PC-3 (cell line): ENCODE measurements at regions of chr3 and their contacts with region 1.

Region 1: GRCh38 chr3:190629088-190629487 is 115.2 kb downstream of the IL1RAP start:
- DNase-seq: no peak
- ATAC-seq: no peak
- H3K4me3 ChIP-seq: no peak overlapping the region
- H3K27ac ChIP-seq: no peak overlapping the region
- H3K4me1 ChIP-seq: no peaks in the 10 kb centered on the region
- H3K27me3 ChIP-seq: no peaks in the 10 kb centered on the region
- CTCF ChIP-seq: no peak

Region 2: DNA sequence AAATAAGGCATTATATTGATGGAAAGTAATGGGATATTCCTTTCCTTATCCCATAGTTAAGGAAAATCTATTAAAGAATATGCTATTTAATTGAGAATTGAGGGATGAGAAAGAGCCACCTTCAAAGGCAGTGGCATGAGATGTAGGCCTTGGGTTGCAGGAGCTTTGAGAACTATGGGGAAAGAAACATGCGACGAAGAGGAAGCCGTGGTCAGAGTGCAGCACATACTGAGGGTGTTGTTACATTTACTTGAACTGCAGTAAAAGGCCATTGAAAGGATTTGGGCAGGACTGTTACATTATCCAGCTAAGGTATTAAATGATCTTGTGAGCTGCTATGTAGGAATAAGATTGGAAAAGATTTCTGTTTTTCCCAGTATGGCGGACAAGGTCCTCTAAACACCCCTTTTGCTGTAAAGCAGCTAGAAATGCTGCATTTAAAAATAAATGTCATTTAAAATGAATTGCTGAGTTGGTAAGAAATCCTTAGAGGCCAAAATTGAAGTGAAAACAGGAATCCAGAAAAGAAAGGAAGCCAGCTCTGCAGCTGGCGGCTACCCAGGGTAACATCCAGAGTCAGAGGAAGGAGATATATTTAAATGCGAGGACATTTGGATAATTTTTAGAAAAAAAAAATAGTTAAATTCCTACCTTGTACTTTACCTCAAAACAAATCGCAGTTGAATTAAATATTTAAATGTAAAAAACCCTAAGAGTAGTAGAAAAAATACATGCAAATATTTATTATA is 53.5 kb before region 1 on chr3:
- CTCF ChIA-PET with region 1: no interaction called
- POLR2A ChIA-PET with region 1: interaction called, 10 read pairs
- intact Hi-C with region 1: no loop called
- DNase-seq: no peak
- ATAC-seq: no peak
- H3K4me3 ChIP-seq: no peak overlapping the region
- H3K27ac ChIP-seq: no peak overlapping the region
- H3K4me1 ChIP-seq: no peaks in the 10 kb centered on the region
- H3K27me3 ChIP-seq: no peaks in the 10 kb centered on the region
- CTCF ChIP-seq: no peak